ENCODE measurements at regions of chr6 and their contacts with region 1.

Region 1: GRCh38 chr6:106997390-106998158 is 23.0 kb upstream of the CD24 start:
- DNase-seq: peak in 13 of 14 experiments; percentile 11 to 67 (median 32)
- ATAC-seq: no peak
- H3K4me3 ChIP-seq: no peak overlapping the region
- H3K4me3 Mint-ChIP-seq: no peak overlapping the region
- H3K27ac ChIP-seq: no peak overlapping the region
- H3K27ac Mint-ChIP-seq: no peak overlapping the region
- H3K4me1 ChIP-seq: peaks cover 2% of the 10 kb centered on the region
- H3K4me1 Mint-ChIP-seq: peaks cover 4% of the 10 kb centered on the region
- H3K27me3 ChIP-seq: peaks cover 0 to 2% of the 10 kb centered on the region in 2 experiments
- H3K27me3 Mint-ChIP-seq: no peaks in the 10 kb centered on the region
- CTCF ChIP-seq: no peak

Region 2: GRCh38 chr6:106360410-106360988 is 637.1 kb before region 1 on chr6 and contains the start of gene CRYBG1:
- CTCF ChIA-PET with region 1: no interaction called
- POLR2A ChIA-PET with region 1: no interaction called
- intact Hi-C with region 1: no loop called
- DNase-seq: peak; percentile 52 to 89 (median 65)
- ATAC-seq: peak; percentile 97
- H3K4me3 ChIP-seq: peak within 1 kb of the TSS; percentile 59
- H3K4me3 Mint-ChIP-seq: peak within 1 kb of the TSS; percentile 85
- H3K27ac ChIP-seq: no peak within 1 kb of the TSS
- H3K27ac Mint-ChIP-seq: no peak within 1 kb of the TSS
- H3K4me1 ChIP-seq: peaks cover 14% of the 10 kb centered on the region
- H3K4me1 Mint-ChIP-seq: peaks cover 6% of the 10 kb centered on the region
- H3K27me3 ChIP-seq: peaks cover 22 to 32% of the 10 kb centered on the region in 2 experiments
- H3K27me3 Mint-ChIP-seq: peaks cover 49% of the 10 kb centered on the region
- CTCF ChIP-seq: peak; percentile 89
- total RNA-seq, gene CRYBG1: 58.5 to 59.4 TPM

Region 3: GRCh38 chr6:106608062-106608668 is 389.4 kb before region 1 on chr6:
- CTCF ChIA-PET with region 1: no interaction called
- POLR2A ChIA-PET with region 1: no interaction called
- intact Hi-C with region 1: loop called in 1 of 2 experiments (anchors 10 kb)
- DNase-seq: peak in 5 of 14 experiments; percentile 7 to 72 (median 62)
- ATAC-seq: peak; percentile 86
- H3K4me3 ChIP-seq: no peak overlapping the region
- H3K4me3 Mint-ChIP-seq: no peak overlapping the region
- H3K27ac ChIP-seq: no peak overlapping the region
- H3K27ac Mint-ChIP-seq: no peak overlapping the region
- H3K4me1 ChIP-seq: no peaks in the 10 kb centered on the region
- H3K4me1 Mint-ChIP-seq: peaks cover 5% of the 10 kb centered on the region
- H3K27me3 ChIP-seq: no peaks in the 10 kb centered on the region
- H3K27me3 Mint-ChIP-seq: no peaks in the 10 kb centered on the region
- CTCF ChIP-seq: peak; percentile 70

Measured in CD4-positive, alpha-beta T cell (primary cell).